KBM-7 (cell line): ENCODE measurements at regions of chr9 and their contacts with region 1.

Region 1: GRCh38 chr9:726059-726458 is 115.4 kb upstream of the DMRT1 start:
- DNase-seq: no peak

Region 2: GRCh38 chr9:297104-297972 is 428.7 kb before region 1 on chr9:
- in situ Hi-C with region 1: no loop called
- DNase-seq: peak; percentile 93

Region 3: DNA sequence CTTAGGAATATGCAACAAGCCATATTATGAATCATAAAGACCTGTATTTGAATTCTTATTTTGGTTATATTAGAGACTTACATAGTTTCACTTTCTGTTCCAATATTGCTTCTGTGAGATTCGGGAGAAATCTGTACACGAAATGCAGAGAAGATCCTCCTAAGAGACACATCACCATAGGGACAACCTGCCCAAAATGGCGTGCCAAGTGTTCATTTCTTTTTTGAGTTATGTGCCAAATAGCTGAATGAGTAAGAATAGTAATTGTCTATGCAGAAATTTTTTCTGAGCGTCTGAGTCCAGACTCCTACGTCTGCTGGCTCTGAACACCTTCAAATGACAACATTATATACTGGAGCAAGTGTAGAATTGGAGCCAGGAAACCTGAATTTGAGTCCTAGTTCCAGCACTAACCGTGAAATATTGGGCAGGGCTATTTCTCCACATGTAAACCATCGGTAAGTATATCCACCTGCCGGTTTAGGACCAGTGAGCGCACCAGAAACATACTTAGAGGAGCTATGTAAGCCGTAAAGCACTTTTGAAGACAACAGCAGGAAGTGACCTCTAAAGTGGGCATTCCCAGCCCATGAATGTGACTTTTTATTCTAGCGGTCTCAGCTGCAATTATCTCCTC is 48.5 kb before region 1 on chr9:
- in situ Hi-C with region 1: loop called (anchors 10 kb)
- DNase-seq: no peak